ENCODE measurements at regions of chr2 and their contacts with region 1.

Region 1: DNA sequence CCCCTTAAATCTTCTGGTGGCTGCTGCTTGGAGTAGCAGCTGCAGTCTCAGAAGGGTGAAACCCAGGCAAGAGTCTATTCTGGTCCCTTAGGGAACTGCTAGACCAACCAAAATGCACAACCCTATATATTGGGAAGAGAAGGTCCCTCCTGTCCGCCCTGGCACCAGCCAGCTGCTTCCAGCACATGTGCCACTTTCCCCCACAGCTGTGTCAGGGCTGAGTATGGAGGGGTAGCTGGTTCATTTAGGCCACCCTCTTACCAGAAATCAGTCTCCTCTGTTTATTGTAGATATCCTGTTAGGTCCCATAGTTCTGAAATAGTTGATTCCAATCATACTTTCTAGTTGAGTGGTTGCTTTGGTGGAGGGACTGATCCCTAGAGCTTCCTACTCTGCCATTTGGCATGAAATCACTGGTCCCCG is 68.9 kb downstream of the BIRC6 start:
- DNase-seq: no peak
- ATAC-seq: peak; percentile 42 to 84
- H3K4me3 ChIP-seq: peak overlapping the region in 1 of 4 donors; percentile 14
- H3K27ac ChIP-seq: peak overlapping the region; percentile 45 to 72 (median 64)
- H3K4me1 ChIP-seq: peaks cover 41 to 56% of the 10 kb centered on the region in 2 donors
- H3K27me3 ChIP-seq: no peaks in the 10 kb centered on the region
- CTCF ChIP-seq: no peak
- POLR2A ChIP-seq: no peak

Region 2: DNA sequence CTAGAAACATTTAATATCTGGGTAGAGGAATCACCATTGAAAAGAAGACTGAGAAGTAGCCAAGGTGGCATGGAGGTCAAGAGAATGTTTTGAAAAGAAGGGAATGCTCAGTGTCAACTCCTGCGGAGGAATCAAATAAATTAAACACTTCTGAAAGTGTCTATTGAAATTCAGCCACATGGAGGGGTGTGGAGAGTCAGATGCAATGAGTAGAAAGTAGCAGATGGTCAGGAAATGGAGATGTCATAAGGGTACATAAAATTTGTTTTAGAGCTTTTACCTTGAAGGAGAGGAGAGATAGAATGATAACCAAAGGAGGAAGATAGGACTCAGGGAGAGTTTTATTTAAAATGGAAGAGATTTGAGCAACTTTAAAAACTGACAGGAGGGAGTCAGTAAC is 196.1 kb before region 1 on chr2:
- in situ Hi-C with region 1: no loop called
- intact Hi-C with region 1: no loop called
- DNase-seq: no peak
- ATAC-seq: no peak
- H3K4me3 ChIP-seq: no peak overlapping the region
- H3K27ac ChIP-seq: no peak overlapping the region
- H3K4me1 ChIP-seq: no peaks in the 10 kb centered on the region
- H3K27me3 ChIP-seq: no peaks in the 10 kb centered on the region
- CTCF ChIP-seq: no peak
- POLR2A ChIP-seq: no peak

Region 3: GRCh38 chr2:32464431-32464830 is 38.7 kb after region 1 on chr2:
- in situ Hi-C with region 1: no loop called
- intact Hi-C with region 1: loop called (anchors 5 kb)
- DNase-seq: no peak
- ATAC-seq: no peak
- H3K4me3 ChIP-seq: no peak overlapping the region
- H3K27ac ChIP-seq: no peak overlapping the region
- H3K4me1 ChIP-seq: no peaks in the 10 kb centered on the region
- H3K27me3 ChIP-seq: no peaks in the 10 kb centered on the region
- CTCF ChIP-seq: no peak
- POLR2A ChIP-seq: no peak

Region 4: GRCh38 chr2:34105015-34105767 is 1679.5 kb after region 1 on chr2:
- in situ Hi-C with region 1: no loop called
- intact Hi-C with region 1: no loop called
- DNase-seq: no peak
- ATAC-seq: no peak
- H3K4me3 ChIP-seq: no peak overlapping the region
- H3K27ac ChIP-seq: no peak overlapping the region
- H3K4me1 ChIP-seq: no peaks in the 10 kb centered on the region
- H3K27me3 ChIP-seq: no peaks in the 10 kb centered on the region
- CTCF ChIP-seq: no peak
- POLR2A ChIP-seq: no peak

Measured in gastrocnemius medialis (tissue), 4 donors.